Dorsolateral prefrontal cortex (tissue), 120 donors: ENCODE measurements at regions of chr15 and their contacts with region 1.

Region 1: DNA sequence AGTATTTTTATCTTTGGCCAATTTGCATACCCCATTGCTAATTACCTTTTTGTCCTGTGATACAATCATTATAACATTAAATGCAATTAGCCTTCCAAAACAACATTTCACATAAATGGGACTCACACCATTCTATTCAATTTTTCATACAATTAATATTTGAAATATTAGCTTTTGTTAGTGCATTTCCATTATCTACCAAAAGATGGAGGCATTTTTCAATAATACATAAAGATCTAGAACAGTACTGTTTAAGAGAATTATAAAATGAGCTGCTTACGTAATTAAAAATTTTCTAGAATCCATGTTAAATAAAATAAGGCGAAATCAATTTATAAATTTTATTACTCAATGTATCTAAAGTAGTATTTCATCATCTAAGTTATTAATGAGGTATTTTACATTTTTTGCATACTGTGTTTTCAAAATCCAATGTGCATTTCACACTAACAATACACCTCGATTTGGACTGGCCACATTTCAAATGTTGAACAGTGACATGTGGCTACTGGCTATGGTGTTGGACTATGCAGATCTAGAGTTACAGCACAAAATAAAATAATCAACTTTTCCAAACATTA is 74.3 kb downstream of the TJP1 start:
- DNase-seq: no peak
- H3K4me3 ChIP-seq: no peak overlapping the region
- H3K27ac ChIP-seq: peak overlapping the region in 40 of 59 donors; percentile 3 to 89 (median 54)
- H3K27me3 ChIP-seq: no peaks in the 10 kb centered on the region
- CTCF ChIP-seq: peak in 55 of 56 donors; percentile 33 to 77 (median 55)

Region 2: GRCh38 chr15:29470311-29471193 is 277.4 kb before region 1 on chr15:
- intact Hi-C with region 1: no loop called
- DNase-seq: peak in 1 of 10 donors; percentile 16
- H3K4me3 ChIP-seq: no peak overlapping the region
- H3K27ac ChIP-seq: peak overlapping the region in 5 of 59 donors; percentile 9 to 21 (median 19)
- H3K27me3 ChIP-seq: no peaks in the 10 kb centered on the region
- CTCF ChIP-seq: no peak

Region 3: GRCh38 chr15:29800491-29801366 is 52.8 kb after region 1 on chr15:
- intact Hi-C with region 1: loop called in 1 of 2 experiments (anchors 5 kb)
- DNase-seq: no peak
- H3K4me3 ChIP-seq: peak overlapping the region in 25 of 59 donors; percentile 2 to 39 (median 10)
- H3K27ac ChIP-seq: peak overlapping the region in 50 of 59 donors; percentile 0 to 68 (median 41)
- H3K27me3 ChIP-seq: no peaks in the 10 kb centered on the region
- CTCF ChIP-seq: no peak

Region 4: GRCh38 chr15:29821416-29822131 is 73.6 kb after region 1 on chr15:
- intact Hi-C with region 1: loop called (anchors 5 to 10 kb)
- DNase-seq: peak in 8 of 10 donors; percentile 23 to 80 (median 57)
- H3K4me3 ChIP-seq: peak overlapping the region; percentile 53 to 93 (median 80)
- H3K27ac ChIP-seq: peak overlapping the region; percentile 61 to 97 (median 91)
- H3K27me3 ChIP-seq: no peaks in the 10 kb centered on the region
- CTCF ChIP-seq: peak in 13 of 56 donors; percentile 6 to 21 (median 12)

Region 5: DNA sequence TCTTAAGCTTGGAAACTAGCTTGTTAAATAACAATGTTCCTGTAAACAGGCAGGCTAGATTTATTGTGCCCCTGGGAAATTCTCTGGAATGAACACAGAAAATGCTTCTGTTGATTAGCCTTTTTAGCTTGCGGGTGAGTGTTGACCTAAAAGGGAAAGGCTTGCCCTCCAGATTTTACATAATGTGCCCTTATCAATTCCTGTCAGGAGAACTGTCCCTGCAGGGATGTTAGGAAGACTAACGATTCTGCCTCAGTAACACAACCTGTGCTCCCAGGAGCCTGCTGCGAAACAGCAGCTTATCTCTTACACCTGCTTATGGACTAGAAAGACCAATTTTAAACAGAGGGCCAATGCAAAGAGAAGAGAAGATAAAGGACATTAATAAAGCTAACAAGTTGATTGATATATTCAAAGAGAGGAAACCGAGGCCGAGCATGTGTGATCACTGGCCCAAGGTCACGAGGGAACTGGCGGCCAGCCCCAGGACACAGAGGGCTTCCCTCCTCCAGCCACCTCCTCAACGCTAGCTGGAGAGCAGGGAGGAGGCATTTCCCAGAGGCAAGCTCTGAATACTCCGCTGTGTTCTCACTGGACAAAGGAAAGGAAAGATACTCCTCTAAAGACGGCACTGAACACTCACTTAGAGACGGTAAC is 122.7 kb after region 1 on chr15:
- intact Hi-C with region 1: loop called in 1 of 2 experiments (anchors 5 kb)
- DNase-seq: peak in 3 of 10 donors; percentile 41 to 54 (median 46)
- H3K4me3 ChIP-seq: peak overlapping the region in 38 of 59 donors; percentile 0 to 43 (median 20)
- H3K27ac ChIP-seq: peak overlapping the region; percentile 51 to 94 (median 85)
- H3K27me3 ChIP-seq: no peaks in the 10 kb centered on the region
- CTCF ChIP-seq: no peak

Region 6: DNA sequence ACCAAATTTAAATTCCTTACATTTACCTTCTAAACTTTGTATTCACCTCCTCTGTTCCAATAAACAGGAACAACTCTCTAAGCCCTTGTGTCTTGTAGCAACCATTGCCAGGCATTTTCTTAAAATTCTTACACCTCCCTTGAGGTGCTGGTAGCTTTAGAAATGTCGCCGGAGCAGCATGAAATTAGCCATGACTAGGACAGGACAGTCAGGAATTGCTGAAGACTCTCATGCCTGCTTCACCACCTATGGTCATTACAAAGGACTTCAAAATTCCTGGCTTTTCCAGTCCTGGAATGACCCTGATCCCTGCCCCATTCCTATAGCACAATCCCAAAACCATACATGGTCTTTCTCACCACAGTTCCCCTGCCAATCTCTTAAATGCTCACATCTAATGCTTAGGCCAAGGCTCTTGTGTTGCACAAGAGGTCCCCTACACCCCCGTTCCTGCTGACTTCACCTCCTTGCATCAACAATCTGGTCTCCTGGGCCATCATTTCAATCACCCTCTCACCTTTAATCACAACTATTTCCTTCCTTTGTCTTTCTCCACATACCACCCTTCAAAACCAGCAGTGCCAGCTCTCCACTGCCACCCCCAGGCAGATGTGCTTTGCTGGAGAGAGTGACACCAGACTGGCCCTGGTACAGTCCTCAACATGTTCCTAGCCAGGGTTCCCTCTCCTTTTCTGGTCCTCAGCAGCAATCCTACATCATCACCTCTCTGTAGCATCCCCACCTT is 187.5 kb after region 1 on chr15:
- intact Hi-C with region 1: loop called (anchors 5 to 10 kb)
- DNase-seq: no peak
- H3K4me3 ChIP-seq: no peak overlapping the region
- H3K27ac ChIP-seq: peak overlapping the region in 44 of 59 donors; percentile 2 to 92 (median 56)
- H3K27me3 ChIP-seq: no peaks in the 10 kb centered on the region
- CTCF ChIP-seq: peak in 41 of 56 donors; percentile 8 to 64 (median 35)

Region 7: GRCh38 chr15:30073915-30074314 is 326.0 kb after region 1 on chr15:
- intact Hi-C with region 1: loop called (anchors 5 kb)
- DNase-seq: no peak
- H3K4me3 ChIP-seq: no peak overlapping the region
- H3K27ac ChIP-seq: peak overlapping the region in 13 of 59 donors; percentile 5 to 84 (median 47)
- H3K27me3 ChIP-seq: no peaks in the 10 kb centered on the region
- CTCF ChIP-seq: no peak